Heart left ventricle (tissue), 16 donors: ENCODE measurements at regions of chr2 and their contacts with region 1.

Region 1: DNA sequence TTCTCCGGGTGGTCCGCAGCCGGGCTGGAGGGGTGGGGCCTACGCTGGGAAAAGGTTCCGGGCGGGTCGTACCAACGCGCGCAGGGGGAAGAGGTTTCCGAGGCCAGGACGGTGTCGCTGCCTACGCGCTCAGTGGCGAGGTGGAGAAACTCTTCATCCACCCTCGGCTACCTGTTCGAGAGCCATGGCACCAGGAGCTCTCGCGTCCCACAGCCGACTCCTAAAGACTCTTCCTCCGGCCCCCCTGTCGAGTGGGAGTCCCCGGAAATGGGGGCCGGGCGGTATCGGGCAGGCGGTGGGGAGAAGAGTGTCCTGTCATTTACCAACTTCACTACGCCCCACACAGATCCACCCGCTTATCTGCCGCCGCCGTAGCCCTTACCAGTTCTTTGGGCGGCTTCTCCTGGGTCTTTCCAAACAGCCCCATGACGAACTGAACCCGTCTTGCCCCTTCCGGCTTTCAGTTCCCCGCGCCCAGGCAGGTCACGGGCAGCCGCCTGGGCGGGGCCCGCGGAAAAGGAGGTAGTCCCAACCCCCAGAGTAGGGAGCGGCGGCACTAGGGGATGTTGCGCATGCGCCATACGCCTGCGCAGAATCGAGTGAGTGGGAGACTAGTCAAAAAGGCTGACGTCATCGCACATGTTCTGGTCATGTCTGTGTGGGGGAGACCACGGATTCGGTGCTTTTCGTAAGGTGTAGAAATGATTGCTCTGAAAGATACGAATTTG is at the start of gene CHMP3:
- DNase-seq: peak; percentile 96 to 99 (median 98)
- ATAC-seq: peak; percentile 97 to 99 (median 98)
- H3K4me3 ChIP-seq: peak within 1 kb of the TSS; percentile 67 to 97 (median 80)
- H3K27ac ChIP-seq: peak within 1 kb of the TSS; percentile 98 to 100 (median 99)
- H3K4me1 ChIP-seq: peaks cover 0 to 50% (median 29%) of the 10 kb centered on the region in 12 donors
- H3K27me3 ChIP-seq: no peaks in the 10 kb centered on the region
- CTCF ChIP-seq: no peak
- POLR2A ChIP-seq: peak in 1 of 2 donors; percentile 58
- total RNA-seq, gene CHMP3: 75.4 to 178 (median 145) TPM

Region 2: DNA sequence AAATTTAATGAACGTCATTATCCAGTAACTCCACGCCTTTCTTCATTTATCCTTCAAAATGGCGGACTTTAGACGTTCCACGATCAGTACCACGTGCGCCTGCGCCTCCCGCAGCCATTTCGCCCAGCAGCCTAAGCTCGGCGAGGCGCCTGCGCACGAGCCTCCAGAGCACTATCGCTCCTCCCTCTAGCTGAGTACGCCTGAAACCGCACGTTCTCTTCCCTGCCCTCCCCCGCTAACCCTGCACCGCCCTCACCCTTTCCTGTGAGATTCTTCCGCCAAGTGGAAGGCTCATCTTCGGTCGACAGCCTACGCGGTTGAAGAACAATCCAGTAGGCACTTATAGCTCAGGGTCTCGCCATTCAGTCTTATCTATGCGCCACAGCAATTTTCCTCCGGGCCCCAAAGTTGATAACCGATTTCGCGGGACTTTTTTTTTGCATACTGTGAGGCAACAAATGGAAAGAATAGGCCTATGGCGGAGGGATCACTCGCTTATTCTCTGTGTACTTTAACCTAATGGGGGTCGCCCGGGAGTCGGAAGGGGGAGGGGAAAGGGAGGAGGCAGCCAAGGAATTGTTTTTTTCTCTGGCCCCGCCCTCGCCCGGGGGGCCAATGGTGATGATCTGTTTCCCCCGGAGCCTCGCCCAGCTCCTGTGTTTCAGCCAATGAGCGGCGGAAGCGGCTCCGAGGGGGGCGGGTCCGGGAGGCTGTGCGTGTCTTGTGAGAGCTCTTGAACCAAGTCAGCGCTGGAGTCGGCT is 122.3 kb before region 1 on chr2 and contains the start of gene KDM3A:
- intact Hi-C with region 1: loop called in 3 of 10 experiments (anchors 2 to 10 kb)
- DNase-seq: peak; percentile 99 to 100 (median 100)
- ATAC-seq: peak; percentile 94 to 96 (median 95)
- H3K4me3 ChIP-seq: peak within 1 kb of the TSS; percentile 67 to 97 (median 76)
- H3K27ac ChIP-seq: peak within 1 kb of the TSS; percentile 91 to 99 (median 96)
- H3K4me1 ChIP-seq: peaks cover 0 to 35% (median 31%) of the 10 kb centered on the region in 12 donors
- H3K27me3 ChIP-seq: no peaks in the 10 kb centered on the region
- CTCF ChIP-seq: peak in 2 of 12 donors; percentile 15 to 25
- POLR2A ChIP-seq: peak in 1 of 2 donors; percentile 99
- total RNA-seq, gene KDM3A: 17.7 to 44.0 (median 35.4) TPM

Region 3: GRCh38 chr2:86480105-86480504 is 83.0 kb before region 1 on chr2:
- intact Hi-C with region 1: loop called in 1 of 10 experiments (anchors 10 kb)
- DNase-seq: peak; percentile 12 to 65 (median 35)
- ATAC-seq: peak; percentile 57 to 69 (median 58)
- H3K4me3 ChIP-seq: no peak overlapping the region
- H3K27ac ChIP-seq: peak overlapping the region in 5 of 12 donors; percentile 9 to 62 (median 18)
- H3K4me1 ChIP-seq: peaks cover 3 to 60% (median 27%) of the 10 kb centered on the region in 12 donors
- H3K27me3 ChIP-seq: no peaks in the 10 kb centered on the region
- CTCF ChIP-seq: no peak
- POLR2A ChIP-seq: no peak

Region 4: DNA sequence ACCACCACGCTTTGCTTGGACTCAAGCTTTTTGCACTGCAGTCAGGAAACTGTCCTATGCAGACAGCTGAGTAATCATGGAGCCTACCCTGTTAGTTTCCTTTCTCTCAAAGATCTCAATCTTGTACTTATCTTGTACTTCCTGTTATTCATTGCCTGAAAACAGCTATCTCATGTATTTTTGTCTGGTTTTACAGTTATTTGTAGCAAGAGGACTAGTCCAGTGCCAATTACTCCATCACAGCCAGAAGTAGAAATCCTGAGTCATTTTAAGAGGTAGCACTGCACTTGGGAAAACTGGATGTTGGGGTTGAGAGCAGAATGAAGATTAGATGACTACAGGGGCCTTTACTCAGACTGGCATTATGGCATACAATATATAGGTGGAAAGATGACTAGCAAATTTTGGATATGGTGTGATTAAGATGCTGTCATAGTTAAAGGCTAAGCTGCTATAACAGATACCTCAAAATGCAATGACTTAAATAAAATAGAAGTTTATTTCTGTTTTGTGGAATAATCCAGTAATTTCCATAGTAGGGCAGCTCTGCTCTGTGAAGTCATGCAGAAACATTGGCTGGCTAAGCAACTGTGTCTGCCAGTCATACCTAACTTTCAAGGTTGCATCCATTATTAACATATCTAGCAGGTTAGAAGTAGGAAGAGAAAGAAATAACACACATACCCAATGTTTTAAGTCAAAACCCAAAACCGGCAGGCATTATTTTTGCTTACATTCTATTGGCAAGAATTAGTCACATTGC is 21.2 kb after region 1 on chr2:
- intact Hi-C with region 1: loop called in 1 of 10 experiments (anchors 2 kb)
- DNase-seq: no peak
- ATAC-seq: peak; percentile 15 to 83 (median 74)
- H3K4me3 ChIP-seq: no peak overlapping the region
- H3K27ac ChIP-seq: peak overlapping the region in 3 of 12 donors; percentile 8 to 78 (median 16)
- H3K4me1 ChIP-seq: peaks cover 0 to 15% (median 8%) of the 10 kb centered on the region in 12 donors
- H3K27me3 ChIP-seq: no peaks in the 10 kb centered on the region
- CTCF ChIP-seq: no peak
- POLR2A ChIP-seq: no peak

Region 5: GRCh38 chr2:86675511-86676015 is 112.5 kb after region 1 on chr2:
- intact Hi-C with region 1: no loop called
- DNase-seq: no peak
- ATAC-seq: no peak
- H3K4me3 ChIP-seq: no peak overlapping the region
- H3K27ac ChIP-seq: peak overlapping the region in 8 of 12 donors; percentile 1 to 69 (median 56)
- H3K4me1 ChIP-seq: peaks cover 0 to 29% (median 9%) of the 10 kb centered on the region in 12 donors
- H3K27me3 ChIP-seq: no peaks in the 10 kb centered on the region
- CTCF ChIP-seq: peak in 1 of 12 donors; percentile 8
- POLR2A ChIP-seq: no peak